ENCODE measurements at regions of chr14 and their contacts with region 1.

Region 1: DNA sequence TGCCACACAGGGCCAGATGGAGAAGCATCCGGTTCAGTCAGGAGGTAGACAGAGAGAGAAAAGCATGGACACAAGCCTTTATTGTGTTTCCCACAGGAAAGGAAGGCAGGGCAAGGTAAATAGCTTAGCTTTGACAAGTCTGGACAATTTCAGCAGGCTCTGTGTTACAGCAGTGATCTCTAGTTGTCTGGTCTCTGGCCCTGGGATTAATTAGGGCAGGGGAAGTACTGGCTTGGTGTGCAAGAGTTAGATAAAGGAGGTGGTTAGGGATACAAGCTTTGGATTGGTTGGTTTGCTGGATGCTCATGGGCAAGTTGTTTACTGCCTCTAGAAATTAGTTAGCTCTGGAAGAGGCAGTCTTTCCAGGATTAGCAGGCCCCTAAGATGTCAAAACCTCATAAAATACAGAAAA is 15.1 kb upstream of the NGDN start:
- DNase-seq: no peak
- H3K4me3 ChIP-seq: no peak overlapping the region
- H3K27ac ChIP-seq: no peak overlapping the region
- H3K4me1 ChIP-seq: peaks cover 0 to 2% (median 0%) of the 10 kb centered on the region in 4 experiments; a peak in 1 of 7 replicates
- H3K27me3 ChIP-seq: no peaks in the 10 kb centered on the region
- CTCF ChIP-seq: no peak
- EP300 ChIP-seq: no peak
- POLR2A ChIP-seq: no peak
- RAD21 ChIP-seq: no peak

Region 2: GRCh38 chr14:23436327-23437132 is 17.9 kb before region 1 on chr14:
- CTCF ChIA-PET with region 1: interaction called, 26 read pairs
- POLR2A ChIA-PET with region 1: interaction called, 4 read pairs
- DNase-seq: no peak
- H3K4me3 ChIP-seq: no peak overlapping the region
- H3K27ac ChIP-seq: no peak overlapping the region
- H3K4me1 ChIP-seq: peaks cover 0 to 6% (median 2%) of the 10 kb centered on the region in 4 experiments; a peak in 2 of 7 replicates
- H3K27me3 ChIP-seq: peaks cover 0 to 4% (median 1%) of the 10 kb centered on the region in 4 experiments; a peak in 2 of 7 replicates
- CTCF ChIP-seq: no peak
- EP300 ChIP-seq: no peak
- POLR2A ChIP-seq: no peak
- RAD21 ChIP-seq: no peak

Region 3: GRCh38 chr14:23469127-23469905 is 14.9 kb after region 1 on chr14 and contains the start of gene NGDN:
- CTCF ChIA-PET with region 1: interaction called, 17 read pairs
- POLR2A ChIA-PET with region 1: interaction called, 4 read pairs
- DNase-seq: peak; percentile 94 to 96
- H3K4me3 ChIP-seq: peak within 1 kb of the TSS; percentile 89 to 97 (median 96)
- H3K27ac ChIP-seq: peak within 1 kb of the TSS; percentile 79
- H3K4me1 ChIP-seq: peaks cover 0 to 3% (median 0%) of the 10 kb centered on the region in 4 experiments; a peak in 1 of 7 replicates
- H3K27me3 ChIP-seq: no peaks in the 10 kb centered on the region
- CTCF ChIP-seq: peak; percentile 74 to 85 (median 80)
- EP300 ChIP-seq: no peak
- POLR2A ChIP-seq: peak; percentile 79 to 85
- RAD21 ChIP-seq: peak; percentile 65 to 68
- total RNA-seq, gene NGDN: 48.8 and 56.0 TPM in 2 replicates

Region 4: DNA sequence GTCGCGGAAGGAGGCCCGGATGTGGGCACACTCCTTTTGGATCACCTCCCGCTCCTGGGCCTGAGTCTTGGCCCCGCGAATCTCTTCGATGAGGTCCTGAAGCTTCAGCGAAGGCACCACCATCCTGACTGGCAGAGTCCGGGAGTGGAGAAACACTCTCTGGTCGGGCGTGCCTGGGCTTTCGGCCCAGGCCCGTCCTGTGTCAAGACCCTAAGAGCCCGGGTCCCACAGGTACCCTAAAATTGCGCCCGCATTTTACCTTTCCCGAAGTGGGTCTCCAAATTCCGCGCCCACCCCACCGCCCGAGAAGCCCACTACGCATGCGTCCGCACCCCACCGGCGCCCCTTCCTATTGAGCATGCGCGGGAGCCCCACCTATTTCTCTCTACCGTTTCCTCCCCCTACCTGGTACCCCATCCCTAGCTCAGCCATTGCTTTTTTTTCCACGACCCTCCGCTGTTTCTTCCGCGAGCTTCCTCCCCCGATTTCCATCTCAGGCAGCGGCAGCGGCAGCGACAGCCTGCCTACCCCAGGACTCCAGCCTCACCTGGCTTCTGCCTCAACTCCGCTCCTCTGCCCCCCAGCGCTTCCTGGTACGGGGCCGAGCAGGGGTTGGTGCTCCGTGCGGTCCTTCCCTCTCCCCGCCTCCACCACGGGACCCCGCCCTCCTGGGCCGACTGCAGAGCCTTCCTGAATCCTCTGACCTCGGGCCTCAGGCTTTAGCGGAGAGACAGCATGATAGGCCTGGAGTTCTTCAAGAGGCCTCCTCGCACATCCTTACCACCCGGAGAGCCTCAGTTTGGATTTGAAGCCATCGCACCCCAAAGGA is 113.0 kb after region 1 on chr14 and contains the start of gene AP1G2:
- CTCF ChIA-PET with region 1: interaction called, 13 read pairs
- POLR2A ChIA-PET with region 1: interaction called, 3 read pairs
- DNase-seq: peak in 1 of 2 experiments; percentile 91
- H3K4me3 ChIP-seq: peak within 1 kb of the TSS; percentile 52 to 81 (median 67)
- H3K27ac ChIP-seq: peak within 1 kb of the TSS; percentile 51
- H3K4me1 ChIP-seq: peaks cover 8 to 21% (median 11%) of the 10 kb centered on the region in 4 experiments
- H3K27me3 ChIP-seq: no peaks in the 10 kb centered on the region
- CTCF ChIP-seq: no peak
- EP300 ChIP-seq: no peak
- POLR2A ChIP-seq: peak; percentile 38 to 86
- RAD21 ChIP-seq: no peak
- total RNA-seq, gene AP1G2: 70.1 and 70.9 TPM in 2 replicates